Activated CD4-positive, alpha-beta T cell treated with anti-CD3 and anti-CD28 coated beads, Interleukin-2, amount 10 ng/mL, durations not matched to agents 24 days and 14 days (primary cell): ENCODE measurements at regions of chr1 and their contacts with region 1.

Region 1: DNA sequence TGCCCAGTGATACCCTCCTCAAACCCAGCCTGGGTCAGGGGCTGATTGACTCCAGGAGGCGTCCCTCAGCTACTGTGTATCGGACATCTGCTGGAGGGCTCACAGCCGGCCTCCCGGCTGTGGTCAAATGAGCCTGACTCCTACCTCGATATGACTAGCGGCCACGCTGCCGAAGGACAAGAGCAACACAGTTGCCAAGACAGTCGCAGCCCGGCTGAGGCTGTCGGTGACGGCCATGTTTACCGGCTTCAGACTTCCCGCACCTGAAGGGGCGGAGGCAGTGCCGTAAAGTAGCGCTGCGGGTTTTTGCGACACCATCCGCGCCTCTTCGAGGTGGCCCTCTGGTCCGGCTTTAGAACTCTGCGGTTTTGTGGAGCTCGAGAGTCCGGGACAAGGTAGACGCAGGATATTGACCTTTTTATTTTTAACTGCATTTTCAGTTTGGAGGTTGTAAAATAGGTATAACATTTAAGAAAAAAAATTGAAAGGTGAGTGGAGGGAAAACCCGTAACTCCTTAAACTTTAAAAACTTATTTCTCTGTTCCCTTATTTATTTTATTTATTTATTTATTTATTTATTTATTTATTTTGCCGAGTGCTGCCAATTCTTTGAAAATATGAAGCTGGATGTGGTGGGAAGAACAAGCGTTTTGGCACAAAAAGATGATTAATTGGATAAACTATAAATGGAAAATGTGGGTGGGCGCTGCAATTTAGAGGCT is at the start of gene PIGK:
- DNase-seq: peak; percentile 97
- H3K4me3 Mint-ChIP-seq: peak within 1 kb of the TSS; percentile 94
- H3K27ac Mint-ChIP-seq: peak within 1 kb of the TSS; percentile 90
- H3K4me1 Mint-ChIP-seq: peaks cover 20% of the 10 kb centered on the region
- H3K27me3 Mint-ChIP-seq: no peaks in the 10 kb centered on the region
- total RNA-seq, gene PIGK: 19.3 and 20.3 TPM in 2 replicates

Region 2: DNA sequence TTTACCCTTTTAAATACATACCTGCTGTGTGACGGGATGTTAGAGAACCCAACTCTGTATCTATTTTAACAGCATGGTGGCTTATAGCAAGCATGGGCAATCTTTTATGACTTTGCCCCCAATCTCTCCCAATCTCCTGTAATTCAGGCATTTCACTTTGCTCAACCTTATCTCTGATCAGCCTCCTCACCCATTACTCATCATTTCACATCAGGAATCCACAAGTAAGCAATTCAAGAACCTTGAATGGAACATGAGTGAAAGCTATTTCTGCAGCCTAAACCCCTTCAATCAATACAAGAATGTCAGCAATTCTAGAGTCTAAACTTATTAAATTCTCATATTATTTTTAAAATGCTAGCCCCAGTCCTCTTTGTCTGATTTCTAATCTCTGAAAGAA is 945.0 kb before region 1 on chr1:
- intact Hi-C with region 1: loop called (anchors 5 kb)
- DNase-seq: no peak
- H3K4me3 Mint-ChIP-seq: no peak overlapping the region
- H3K27ac Mint-ChIP-seq: no peak overlapping the region
- H3K4me1 Mint-ChIP-seq: peaks cover 34% of the 10 kb centered on the region
- H3K27me3 Mint-ChIP-seq: no peaks in the 10 kb centered on the region

Region 3: GRCh38 chr1:77281491-77282186 is 62.3 kb after region 1 on chr1 and contains the start of gene AK5:
- intact Hi-C with region 1: loop called (anchors 2 kb)
- DNase-seq: peak; percentile 81
- H3K4me3 Mint-ChIP-seq: peak within 1 kb of the TSS; percentile 71
- H3K27ac Mint-ChIP-seq: no peak within 1 kb of the TSS
- H3K4me1 Mint-ChIP-seq: peaks cover 20% of the 10 kb centered on the region
- H3K27me3 Mint-ChIP-seq: peaks cover 35% of the 10 kb centered on the region
- total RNA-seq, gene AK5: 0.05 and 0.17 TPM in 2 replicates

Region 4: GRCh38 chr1:77430966-77431690 is 211.8 kb after region 1 on chr1:
- intact Hi-C with region 1: loop called (anchors 5 kb)
- DNase-seq: peak; percentile 64
- H3K4me3 Mint-ChIP-seq: no peak overlapping the region
- H3K27ac Mint-ChIP-seq: no peak overlapping the region
- H3K4me1 Mint-ChIP-seq: peaks cover 11% of the 10 kb centered on the region
- H3K27me3 Mint-ChIP-seq: no peaks in the 10 kb centered on the region